ENCODE measurements at regions of chr1 and their contacts with region 1.

Region 1: DNA sequence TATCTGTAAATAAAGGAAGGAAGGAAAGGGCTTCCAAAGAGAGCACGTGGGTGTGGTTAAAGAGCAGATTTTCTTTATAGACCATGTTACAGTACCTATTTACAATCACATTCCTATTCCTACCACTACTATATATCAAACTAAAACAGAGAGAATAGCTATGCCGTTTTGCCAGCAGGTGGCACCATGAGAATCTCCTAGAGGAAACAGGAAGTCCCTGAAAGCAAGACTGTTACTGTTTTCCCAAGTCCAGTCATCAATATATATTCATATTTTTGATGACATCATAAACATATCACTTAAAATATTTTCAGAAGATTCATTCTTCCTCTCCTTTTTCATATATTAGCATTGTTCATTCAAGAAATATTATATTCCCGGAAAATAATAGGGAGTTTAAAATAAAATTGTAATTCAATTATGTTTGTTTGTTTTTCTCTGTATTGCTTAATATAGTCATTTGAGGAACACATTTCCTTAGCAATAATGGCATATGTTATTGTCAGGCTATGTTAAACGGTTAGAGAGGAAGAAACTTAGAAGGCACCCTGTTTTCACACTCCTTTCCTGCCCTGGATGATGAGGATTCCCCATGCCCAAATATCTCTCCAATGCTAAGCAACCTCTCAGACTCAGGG is 6.6 kb downstream of the CCDC190 start:
- DNase-seq: no peak
- ATAC-seq: peak; percentile 94
- H3K4me3 ChIP-seq: no peak overlapping the region
- H3K27ac ChIP-seq: no peak overlapping the region
- H3K4me1 ChIP-seq: no peaks in the 10 kb centered on the region
- H3K27me3 ChIP-seq: 0 out of 4 replicates have a peak, but pooled peaks cover 0 to 1% of the 10 kb centered on the region in 2 experiments
- CTCF ChIP-seq: peak; percentile 70 to 81 (median 72)
- EP300 ChIP-seq: no peak
- POLR2A ChIP-seq: no peak
- RAD21 ChIP-seq: peak; percentile 67

Region 2: DNA sequence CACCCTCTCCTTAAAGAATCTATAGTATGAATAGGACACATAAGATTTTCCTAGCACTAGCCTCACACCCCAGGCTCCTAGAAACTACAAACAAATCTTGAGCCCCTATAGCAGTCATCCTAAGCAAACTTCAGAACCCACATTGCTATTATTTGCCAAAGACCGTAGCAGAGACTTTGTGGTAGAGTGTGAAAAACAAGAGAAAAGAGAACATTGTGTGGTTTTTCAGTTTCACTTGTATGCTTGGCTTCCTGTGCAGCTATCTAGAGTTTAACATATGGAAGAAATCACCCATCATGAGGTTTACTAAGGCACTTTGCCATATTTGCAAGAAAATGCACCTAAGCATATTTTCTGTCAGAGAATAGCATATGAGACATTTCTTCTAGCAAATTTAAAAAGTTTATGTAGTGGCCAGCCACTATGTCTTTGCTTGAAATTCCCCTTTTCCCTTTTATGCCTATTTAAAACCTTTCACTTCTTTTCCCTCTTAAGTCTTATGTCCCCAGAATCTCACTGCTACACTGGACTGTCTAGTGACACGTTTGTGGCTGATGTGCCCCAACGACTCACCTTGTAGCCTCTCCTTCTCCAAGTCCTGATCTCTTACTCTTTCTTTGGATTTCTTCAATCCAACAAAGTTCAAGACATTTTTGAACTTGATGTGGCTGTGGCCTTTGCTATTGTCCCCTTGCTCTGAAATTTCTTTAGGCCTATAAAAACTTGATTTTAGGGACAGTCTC is 19.0 kb before region 1 on chr1:
- CTCF ChIA-PET with region 1: interaction called, 12 read pairs
- POLR2A ChIA-PET with region 1: no interaction called
- RAD21 ChIA-PET with region 1: no interaction called
- SMC1A ChIA-PET with region 1: interaction called, 9 read pairs
- in situ Hi-C with region 1: no loop called
- intact Hi-C with region 1: no loop called
- DNase-seq: peak; percentile 61
- ATAC-seq: peak; percentile 91
- H3K4me3 ChIP-seq: no peak overlapping the region
- H3K27ac ChIP-seq: no peak overlapping the region; the same call in 1 of the 2 replicates
- H3K4me1 ChIP-seq: peaks cover 20% of the 10 kb centered on the region
- H3K27me3 ChIP-seq: no peaks in the 10 kb centered on the region
- CTCF ChIP-seq: no peak
- EP300 ChIP-seq: peak in 1 of 2 experiments; percentile 38; a peak in 1 of 4 replicates
- POLR2A ChIP-seq: no peak
- RAD21 ChIP-seq: no peak

Region 3: GRCh38 chr1:163300568-163300967 is 446.2 kb after region 1 on chr1:
- CTCF ChIA-PET with region 1: interaction called, 10 read pairs
- POLR2A ChIA-PET with region 1: no interaction called
- RAD21 ChIA-PET with region 1: no interaction called
- SMC1A ChIA-PET with region 1: no interaction called
- in situ Hi-C with region 1: no loop called
- intact Hi-C with region 1: no loop called
- DNase-seq: no peak
- ATAC-seq: no peak
- H3K4me3 ChIP-seq: no peak overlapping the region
- H3K27ac ChIP-seq: no peak overlapping the region
- H3K4me1 ChIP-seq: no peaks in the 10 kb centered on the region
- H3K27me3 ChIP-seq: no peaks in the 10 kb centered on the region
- CTCF ChIP-seq: no peak
- EP300 ChIP-seq: no peak
- POLR2A ChIP-seq: no peak
- RAD21 ChIP-seq: no peak

Measured in GM12878 (cell line).